H1 (cell line): ENCODE measurements at regions of chr20 and their contacts with region 1.

Region 1: GRCh38 chr20:36773597-36774390 is at the start of gene DSN1:
- DNase-seq: peak; percentile 97 to 100
- H3K4me3 ChIP-seq: peak within 1 kb of the TSS; percentile 64 to 93 (median 85)
- H3K27ac ChIP-seq: peak within 1 kb of the TSS; percentile 89
- H3K4me1 ChIP-seq: peaks cover 0 to 7% (median 1%) of the 10 kb centered on the region in 4 experiments; a peak in 3 of 7 replicates
- H3K27me3 ChIP-seq: no peaks in the 10 kb centered on the region
- CTCF ChIP-seq: peak in 1 of 3 experiments; percentile 88; a peak in 1 of 4 replicates
- EP300 ChIP-seq: no peak
- POLR2A ChIP-seq: peak; percentile 59 to 87
- RAD21 ChIP-seq: no peak; a peak in 2 of 4 replicates
- total RNA-seq, gene DSN1: 24.8 and 26.2 TPM in 2 replicates

Region 2: GRCh38 chr20:36784900-36785299 is 11.1 kb after region 1 on chr20:
- CTCF ChIA-PET with region 1: interaction called, 22 read pairs
- POLR2A ChIA-PET with region 1: interaction called, 3 read pairs
- DNase-seq: no peak
- H3K4me3 ChIP-seq: no peak overlapping the region
- H3K27ac ChIP-seq: no peak overlapping the region
- H3K4me1 ChIP-seq: no peaks in the 10 kb centered on the region
- H3K27me3 ChIP-seq: no peaks in the 10 kb centered on the region
- CTCF ChIP-seq: no peak
- EP300 ChIP-seq: no peak
- POLR2A ChIP-seq: no peak
- RAD21 ChIP-seq: no peak

Region 3: GRCh38 chr20:37020636-37021035 is 246.8 kb after region 1 on chr20:
- CTCF ChIA-PET with region 1: no interaction called
- POLR2A ChIA-PET with region 1: no interaction called
- DNase-seq: no peak
- H3K4me3 ChIP-seq: no peak overlapping the region
- H3K27ac ChIP-seq: no peak overlapping the region
- H3K4me1 ChIP-seq: no peaks in the 10 kb centered on the region
- H3K27me3 ChIP-seq: no peaks in the 10 kb centered on the region
- CTCF ChIP-seq: no peak
- EP300 ChIP-seq: no peak
- POLR2A ChIP-seq: no peak
- RAD21 ChIP-seq: no peak